Psoas muscle (tissue), 8 donors: ENCODE measurements at regions of chr1 and their contacts with region 1.

Region 1: DNA sequence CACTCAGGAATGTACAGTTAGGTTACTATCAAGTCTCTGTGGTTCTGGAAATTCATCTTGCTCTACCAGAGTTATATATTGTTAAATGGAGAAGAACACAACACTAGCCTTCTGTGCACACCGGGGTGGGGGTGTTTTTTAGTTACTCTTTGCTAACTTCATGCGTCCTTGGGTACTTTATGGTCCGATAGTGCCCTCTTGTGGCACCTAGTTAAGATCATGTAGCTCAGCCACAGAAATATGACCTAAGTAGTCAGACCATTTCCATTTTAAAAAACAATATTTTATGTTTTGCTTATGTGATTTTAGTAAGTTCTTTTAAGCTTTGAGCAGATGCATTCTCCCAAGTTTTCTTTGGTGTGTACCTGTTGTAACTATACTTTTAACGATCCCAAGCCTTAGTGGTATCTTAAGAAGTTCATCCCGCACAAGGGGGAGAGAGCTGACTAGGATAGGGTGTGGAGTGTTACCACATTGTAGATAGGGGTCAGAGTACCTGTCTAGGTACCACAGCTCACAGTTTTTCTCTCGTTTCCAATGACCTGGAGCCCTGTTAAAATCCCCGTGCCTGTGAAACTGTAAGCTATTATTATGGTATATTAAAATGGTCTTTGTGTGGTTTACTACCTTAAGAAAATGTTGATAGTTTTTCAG is 20.6 kb upstream of the SH3D21 start:
- DNase-seq: no peak
- ATAC-seq: peak; percentile 81 to 85 (median 84)
- H3K4me3 ChIP-seq: peak overlapping the region; percentile 30
- H3K27ac ChIP-seq: peak overlapping the region; percentile 91
- H3K4me1 ChIP-seq: peaks cover 93% of the 10 kb centered on the region
- H3K27me3 ChIP-seq: no peaks in the 10 kb centered on the region
- CTCF ChIP-seq: peak; percentile 77

Region 2: DNA sequence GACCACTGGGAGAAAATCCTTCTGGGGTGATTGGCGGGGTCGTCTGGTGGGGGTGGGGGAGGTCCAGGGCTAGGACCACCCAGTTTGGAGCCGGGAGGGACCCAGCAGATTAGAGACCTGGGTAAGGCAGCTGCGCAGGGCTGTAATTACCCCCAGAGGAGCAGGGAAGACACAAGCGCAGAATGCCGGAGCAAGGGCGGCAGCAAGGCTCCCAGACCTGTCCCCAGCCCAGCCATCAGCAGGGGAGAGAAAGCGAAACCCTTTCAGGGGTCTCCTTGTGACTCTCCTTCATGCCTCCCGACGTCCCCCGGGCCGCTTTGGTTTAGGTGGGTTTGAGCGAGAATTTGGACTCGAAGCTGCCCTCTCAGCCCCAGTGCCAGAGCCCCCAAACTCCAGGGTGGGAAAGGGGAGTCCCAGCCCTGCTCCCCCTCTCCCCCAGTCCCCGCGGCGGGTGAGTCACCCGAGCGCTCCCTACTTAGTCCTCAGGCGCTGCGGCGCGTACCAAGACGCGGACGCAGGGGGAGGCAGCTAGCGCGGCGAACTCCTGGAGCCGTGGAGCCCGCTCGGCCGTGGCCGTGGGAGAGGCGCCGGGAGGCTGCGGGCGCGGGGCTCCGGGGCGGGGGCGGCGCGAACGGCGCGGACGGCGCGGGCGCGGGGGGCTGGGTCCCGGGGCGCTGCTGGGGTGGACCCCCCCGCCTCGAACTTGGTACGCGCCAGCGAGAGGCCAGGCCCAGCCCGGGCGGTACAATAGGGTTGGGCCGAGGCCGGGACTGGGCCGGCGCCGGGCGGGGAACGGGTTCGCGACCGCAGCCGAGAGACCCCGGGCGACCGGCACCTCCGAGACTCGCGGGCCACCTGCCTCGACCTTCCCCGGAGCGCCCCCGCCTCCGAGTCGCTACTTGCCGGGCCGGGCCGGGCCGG is 129.9 kb before region 1 on chr1 and contains the start of gene MAP7D1:
- intact Hi-C with region 1: loop called (anchors 5 kb)
- DNase-seq: peak; percentile 91 to 96
- ATAC-seq: peak; percentile 69 to 77 (median 75)
- H3K4me3 ChIP-seq: peak within 1 kb of the TSS; percentile 100
- H3K27ac ChIP-seq: peak within 1 kb of the TSS; percentile 100
- H3K4me1 ChIP-seq: peaks cover 51% of the 10 kb centered on the region
- H3K27me3 ChIP-seq: no peaks in the 10 kb centered on the region
- CTCF ChIP-seq: no peak
- total RNA-seq, gene MAP7D1: 209 to 230 (median 215) TPM

Region 3: GRCh38 chr1:36223993-36224536 is 61.5 kb before region 1 on chr1 and contains the start of gene THRAP3:
- intact Hi-C with region 1: loop called (anchors 2 to 5 kb)
- DNase-seq: peak; percentile 99 to 100
- ATAC-seq: peak; percentile 89 to 95 (median 93)
- H3K4me3 ChIP-seq: peak within 1 kb of the TSS; percentile 94
- H3K27ac ChIP-seq: peak within 1 kb of the TSS; percentile 98
- H3K4me1 ChIP-seq: peaks cover 30% of the 10 kb centered on the region
- H3K27me3 ChIP-seq: no peaks in the 10 kb centered on the region
- CTCF ChIP-seq: no peak
- total RNA-seq, gene THRAP3: 96.6 to 159 (median 124) TPM

Region 4: DNA sequence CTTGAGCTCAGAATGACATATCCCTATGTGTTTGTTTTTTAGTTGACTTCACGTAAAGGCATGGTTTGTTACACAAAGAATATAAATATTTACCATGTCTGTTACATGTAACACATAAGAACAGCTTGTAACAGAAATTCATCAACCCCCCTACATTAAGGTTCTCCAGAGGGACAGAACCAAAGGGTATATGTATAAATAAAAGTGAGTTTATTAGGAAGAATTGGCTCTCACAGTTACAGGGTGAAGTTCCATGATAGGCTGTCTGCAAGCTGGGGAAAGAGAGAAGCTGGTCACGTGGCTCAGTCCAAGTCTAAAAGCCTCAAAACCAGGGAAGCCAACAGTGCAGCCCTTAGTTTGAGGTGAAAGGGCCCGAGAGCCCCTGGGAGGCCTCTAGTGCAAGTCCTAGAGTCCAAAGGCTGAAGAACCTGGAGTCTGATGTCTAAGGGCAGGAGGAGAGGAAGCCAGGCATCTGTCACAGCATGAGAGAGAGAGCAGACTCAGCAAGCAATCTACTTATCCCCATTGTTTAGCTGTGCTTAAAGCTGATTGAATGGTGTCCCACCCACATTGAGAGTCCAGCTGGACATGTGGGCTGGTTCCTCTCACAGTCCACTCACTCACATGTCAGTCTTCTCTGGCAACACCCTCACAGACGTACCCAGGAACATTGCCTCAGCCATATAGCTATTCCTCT is 45.5 kb before region 1 on chr1:
- intact Hi-C with region 1: loop called in 1 of 2 experiments (anchors 5 kb)
- DNase-seq: no peak
- ATAC-seq: peak; percentile 60 to 72 (median 64)
- H3K4me3 ChIP-seq: peak overlapping the region; percentile 40
- H3K27ac ChIP-seq: peak overlapping the region; percentile 84
- H3K4me1 ChIP-seq: peaks cover 65% of the 10 kb centered on the region
- H3K27me3 ChIP-seq: no peaks in the 10 kb centered on the region
- CTCF ChIP-seq: no peak